AG04450 (cell line): ENCODE measurements at regions of chr10 and their contacts with region 1.

Region 1: DNA sequence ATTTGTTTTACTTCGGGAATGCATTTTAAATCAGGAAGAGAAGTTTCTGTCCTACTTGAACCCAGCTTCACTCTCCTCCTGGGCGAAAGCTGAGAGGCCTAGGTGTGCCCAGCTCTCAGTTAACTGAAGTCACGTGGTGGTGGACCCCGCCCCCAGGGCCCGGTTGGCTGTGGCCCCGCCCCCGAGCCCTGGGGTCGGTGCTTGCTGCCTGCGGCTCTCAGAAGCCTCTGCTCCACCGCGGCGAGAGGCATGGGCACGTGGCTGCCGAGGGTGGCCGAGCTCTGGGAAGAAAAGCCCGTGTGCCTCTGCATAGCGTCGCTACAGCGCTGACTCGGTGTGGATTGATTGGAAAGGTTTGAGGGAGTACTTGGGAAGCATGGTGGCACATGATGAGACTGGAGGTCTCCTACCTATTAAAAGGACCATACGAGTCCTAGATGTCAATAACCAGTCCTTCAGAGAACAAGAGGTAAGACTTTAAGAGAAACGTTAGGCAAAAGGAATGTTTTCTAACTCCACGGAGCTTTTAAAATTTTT is 34.1 kb downstream of the NET1 start:
- DNase-seq: peak; percentile 54
- H3K4me3 ChIP-seq: peak overlapping the region; percentile 84
- H3K27ac ChIP-seq: peak overlapping the region; percentile 47
- H3K27me3 ChIP-seq: no peaks in the 10 kb centered on the region
- CTCF ChIP-seq: no peak

Region 2: DNA sequence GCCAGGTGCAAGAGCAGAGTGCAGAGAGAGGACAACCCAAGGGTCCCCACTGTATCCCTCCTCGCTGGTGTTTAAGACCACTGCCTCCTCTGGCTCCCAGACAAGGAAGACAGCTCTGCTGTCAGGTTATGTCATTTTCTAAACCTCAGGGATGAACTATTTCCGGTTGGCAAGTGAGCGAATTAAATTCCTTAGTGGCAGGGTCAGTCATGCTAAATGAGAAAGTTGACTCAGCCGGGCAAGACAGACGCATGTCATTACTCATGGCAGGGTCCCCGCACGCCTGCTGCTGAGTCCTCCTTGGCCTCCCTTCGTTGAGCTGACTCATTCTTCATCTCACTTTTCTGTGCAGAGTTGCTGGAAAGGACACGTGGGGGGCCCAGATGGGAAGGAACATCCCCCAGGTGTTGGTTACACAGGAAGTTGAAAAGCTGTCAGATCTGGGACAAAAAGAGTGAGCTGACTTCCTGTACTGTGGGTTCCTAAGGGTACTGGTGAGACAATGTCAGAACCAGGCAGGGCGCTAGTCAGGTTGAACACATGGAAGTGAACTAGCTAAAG is 128.8 kb before region 1 on chr10:
- CTCF ChIA-PET with region 1: no interaction called
- POLR2A ChIA-PET with region 1: no interaction called
- DNase-seq: no peak
- H3K4me3 ChIP-seq: no peak overlapping the region
- H3K27ac ChIP-seq: peak overlapping the region; percentile 24
- H3K27me3 ChIP-seq: no peaks in the 10 kb centered on the region
- CTCF ChIP-seq: no peak

Region 3: GRCh38 chr10:5423771-5424170 is 22.7 kb before region 1 on chr10:
- CTCF ChIA-PET with region 1: interaction called, 17 read pairs
- POLR2A ChIA-PET with region 1: no interaction called
- DNase-seq: no peak
- H3K4me3 ChIP-seq: no peak overlapping the region
- H3K27ac ChIP-seq: no peak overlapping the region
- H3K27me3 ChIP-seq: no peaks in the 10 kb centered on the region
- CTCF ChIP-seq: no peak

Region 4: GRCh38 chr10:5548527-5549223 is 102.2 kb after region 1 on chr10:
- CTCF ChIA-PET with region 1: interaction called, 4 read pairs
- POLR2A ChIA-PET with region 1: interaction called, 11 read pairs
- DNase-seq: peak; percentile 93
- H3K4me3 ChIP-seq: 0 out of 2 replicates have a peak overlapping the region, but pooled peaks have one; percentile 7
- H3K27ac ChIP-seq: peak overlapping the region; percentile 92
- H3K27me3 ChIP-seq: no peaks in the 10 kb centered on the region
- CTCF ChIP-seq: no peak

Region 5: DNA sequence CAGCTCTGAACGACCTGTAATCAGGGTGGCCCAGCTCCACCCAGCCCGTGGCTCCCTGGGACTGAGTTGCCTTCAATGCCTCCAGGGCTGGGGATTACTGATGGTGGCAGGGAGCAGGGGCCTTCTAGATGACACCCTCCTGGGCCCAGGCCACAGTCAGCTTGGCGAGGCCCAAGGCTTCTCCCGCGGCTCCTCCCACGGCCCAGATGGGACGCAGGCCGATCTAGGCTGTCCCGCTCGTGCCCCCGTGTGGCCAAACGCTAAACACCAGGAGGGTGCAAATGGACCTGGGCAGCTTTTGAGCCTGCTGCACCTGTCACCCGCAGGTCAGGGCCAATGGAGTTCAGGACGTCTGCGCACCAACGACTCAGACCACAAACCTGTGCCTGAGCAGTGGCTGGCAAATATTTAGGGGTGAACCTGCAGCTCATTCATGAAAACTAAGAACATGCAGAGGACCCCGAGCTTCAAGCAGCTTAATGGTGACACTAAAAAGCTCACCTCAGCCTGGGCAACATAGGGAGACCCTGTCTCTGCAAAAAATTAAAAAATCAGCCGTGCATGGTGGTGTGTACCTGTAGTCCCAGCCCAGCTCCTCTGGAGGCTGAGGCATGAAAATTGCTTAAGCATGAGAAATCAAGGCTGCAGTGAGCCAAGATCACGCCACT is 176.8 kb after region 1 on chr10:
- CTCF ChIA-PET with region 1: interaction called, 309 read pairs
- POLR2A ChIA-PET with region 1: interaction called, 16 read pairs
- DNase-seq: peak; percentile 46
- H3K4me3 ChIP-seq: no peak overlapping the region
- H3K27ac ChIP-seq: peak overlapping the region; percentile 31
- H3K27me3 ChIP-seq: no peaks in the 10 kb centered on the region
- CTCF ChIP-seq: peak; percentile 94